Brain microvascular endothelial cell (primary cell): ENCODE measurements at regions of chr4 and their contacts with region 1.

Region 1: DNA sequence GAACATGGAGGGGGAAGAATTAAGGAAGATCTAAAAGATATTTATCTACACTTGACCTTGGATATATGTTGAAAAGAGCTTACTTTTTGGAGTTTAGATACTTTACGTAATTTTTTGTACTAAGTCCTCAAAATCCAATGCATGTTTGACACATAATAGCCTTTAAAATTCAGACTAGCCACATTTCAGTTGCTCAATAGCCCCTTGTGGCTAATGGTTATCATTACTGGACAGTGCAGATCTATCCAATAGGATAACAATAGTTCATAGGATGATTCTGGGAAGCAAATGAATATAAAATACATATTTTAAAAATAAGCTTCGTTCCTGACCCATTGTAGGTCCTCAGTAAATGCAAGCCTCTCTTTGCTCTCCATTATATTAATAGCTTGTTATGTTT is 13.8 kb downstream of the AP1AR start:
- DNase-seq: no peak
- H3K4me3 ChIP-seq: no peak overlapping the region
- H3K27ac ChIP-seq: no peak overlapping the region
- H3K27me3 ChIP-seq: no peaks in the 10 kb centered on the region
- CTCF ChIP-seq: peak; percentile 41

Region 2: DNA sequence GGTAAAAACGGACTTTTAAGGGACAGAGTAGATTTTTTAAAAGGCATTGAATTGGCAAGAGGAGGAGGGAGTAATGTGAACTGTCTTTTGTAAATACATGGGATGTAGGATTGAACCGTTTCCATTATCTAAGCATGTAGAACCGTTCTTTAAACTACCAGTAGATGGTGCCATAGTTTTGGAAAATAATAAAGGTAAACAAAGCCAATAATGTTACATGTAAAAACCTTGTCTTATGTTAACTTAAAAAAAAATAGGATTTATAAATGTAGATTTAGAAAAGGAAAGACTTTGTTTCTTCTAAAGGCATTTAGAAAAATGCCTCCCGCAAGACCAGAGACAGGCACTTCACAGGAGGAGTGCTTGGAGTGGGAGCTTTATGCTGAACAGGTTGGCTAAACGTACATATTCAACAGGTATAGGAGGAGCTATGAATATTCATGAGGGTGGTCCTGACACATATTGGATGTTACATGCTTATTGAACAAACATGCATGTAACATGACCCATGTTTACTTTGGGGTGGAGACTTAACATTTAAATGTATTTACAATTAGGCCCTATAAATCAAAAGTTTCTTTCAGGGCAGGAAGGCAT is 145.6 kb before region 1 on chr4:
- in situ Hi-C with region 1: loop called (anchors 10 kb)
- DNase-seq: no peak
- H3K4me3 ChIP-seq: no peak overlapping the region
- H3K27ac ChIP-seq: no peak overlapping the region
- H3K27me3 ChIP-seq: no peaks in the 10 kb centered on the region
- CTCF ChIP-seq: peak; percentile 27

Region 3: DNA sequence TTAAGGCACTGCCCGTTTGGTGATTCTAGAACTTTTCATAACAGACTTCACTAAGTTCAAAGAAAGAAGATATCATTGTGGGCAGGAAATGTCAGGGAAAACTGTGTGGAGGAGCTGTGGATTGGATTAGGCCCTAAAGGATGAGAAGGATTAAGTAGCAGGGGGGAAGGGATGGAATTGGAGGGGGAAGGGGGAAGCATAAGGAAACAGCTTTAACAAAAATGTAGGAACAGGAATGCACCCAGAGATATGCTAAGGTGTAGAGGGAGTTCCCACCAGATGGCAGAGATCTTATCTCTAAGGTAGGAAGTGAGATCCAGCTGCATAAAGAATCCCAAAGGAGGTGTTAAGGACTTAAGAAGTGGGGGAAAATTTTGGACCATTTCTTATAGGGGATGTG is 506.1 kb after region 1 on chr4:
- in situ Hi-C with region 1: no loop called
- DNase-seq: no peak
- H3K4me3 ChIP-seq: no peak overlapping the region
- H3K27ac ChIP-seq: no peak overlapping the region
- H3K27me3 ChIP-seq: no peaks in the 10 kb centered on the region
- CTCF ChIP-seq: no peak